ENCODE measurements at regions of chr11 and their contacts with region 1.

Region 1: DNA sequence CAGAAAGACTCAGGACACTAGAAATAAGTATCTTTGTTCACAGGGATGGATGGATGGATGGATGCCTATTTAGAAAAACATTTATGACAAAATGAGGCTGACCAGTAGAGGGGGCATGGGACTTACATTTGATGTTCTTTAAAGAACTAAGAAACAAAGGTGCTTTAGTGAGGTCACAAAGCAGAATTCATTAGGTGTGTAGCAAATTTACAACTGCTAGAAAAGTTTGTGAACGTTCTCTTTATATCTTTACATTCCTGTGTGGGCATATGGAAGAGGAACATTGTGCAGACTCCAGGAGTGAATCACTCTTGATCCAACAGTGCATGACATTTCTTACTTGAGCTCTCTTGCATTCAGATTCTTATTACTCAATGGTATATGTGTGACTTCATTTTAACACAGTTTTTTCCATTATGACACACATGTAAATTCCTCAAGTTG is 15.8 kb upstream of the SIK2 start:
- ATAC-seq: peak in 3 of 8 experiments; percentile 48 to 66 (median 50)
- H3K4me3 ChIP-seq: no peak overlapping the region
- H3K27ac ChIP-seq: no peak overlapping the region
- H3K4me1 ChIP-seq: no peaks in the 10 kb centered on the region

Region 2: DNA sequence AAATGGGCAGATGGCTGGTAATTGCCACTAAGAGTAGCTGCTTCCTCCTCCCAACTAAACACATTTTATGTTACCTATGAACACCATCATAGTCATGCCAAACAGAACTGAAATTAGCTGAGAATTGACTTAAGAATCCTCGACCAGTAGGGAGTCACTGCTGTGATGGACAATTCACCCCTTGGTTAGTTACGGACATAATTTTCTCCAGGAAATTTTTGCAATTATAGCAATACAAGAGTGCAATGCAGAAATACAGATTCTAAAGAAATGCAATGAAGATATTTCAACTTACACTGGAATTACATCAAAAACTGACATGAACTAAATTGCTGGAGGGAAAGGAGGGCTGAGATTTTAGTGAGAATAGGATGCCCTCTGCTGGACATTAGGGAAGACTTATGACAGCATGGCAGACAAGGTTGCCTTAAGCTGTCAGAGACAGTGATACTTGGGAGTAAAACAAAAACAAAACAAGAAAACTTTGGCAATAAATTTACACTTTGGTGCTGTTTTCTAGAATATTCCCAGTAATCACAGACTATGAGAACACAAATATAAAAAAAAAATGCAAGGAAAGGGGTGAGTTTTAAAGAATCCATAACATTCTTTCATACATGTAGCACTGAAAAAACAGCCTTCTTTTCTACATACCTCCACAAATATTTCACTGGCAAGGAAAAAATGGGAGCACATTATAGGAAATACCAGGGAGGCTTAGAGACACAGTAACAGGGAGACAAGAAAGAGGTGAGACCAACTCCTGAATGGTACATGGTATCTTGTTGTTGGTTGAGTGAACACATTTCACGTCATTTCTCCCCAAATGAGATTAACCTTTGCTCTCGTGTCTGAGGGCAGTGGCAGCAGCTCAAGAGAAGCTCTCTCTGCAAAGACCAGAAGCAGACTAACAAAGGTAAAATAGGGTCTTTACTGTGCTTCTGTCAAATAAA is 191.0 kb after region 1 on chr11:
- in situ Hi-C with region 1: loop called in 2 of 9 experiments (anchors 25 kb)
- ATAC-seq: peak; percentile 86 to 98 (median 91)
- H3K4me3 ChIP-seq: no peak overlapping the region
- H3K27ac ChIP-seq: no peak overlapping the region
- H3K4me1 ChIP-seq: peaks cover 7 to 10% of the 10 kb centered on the region in 2 donors

Region 3: DNA sequence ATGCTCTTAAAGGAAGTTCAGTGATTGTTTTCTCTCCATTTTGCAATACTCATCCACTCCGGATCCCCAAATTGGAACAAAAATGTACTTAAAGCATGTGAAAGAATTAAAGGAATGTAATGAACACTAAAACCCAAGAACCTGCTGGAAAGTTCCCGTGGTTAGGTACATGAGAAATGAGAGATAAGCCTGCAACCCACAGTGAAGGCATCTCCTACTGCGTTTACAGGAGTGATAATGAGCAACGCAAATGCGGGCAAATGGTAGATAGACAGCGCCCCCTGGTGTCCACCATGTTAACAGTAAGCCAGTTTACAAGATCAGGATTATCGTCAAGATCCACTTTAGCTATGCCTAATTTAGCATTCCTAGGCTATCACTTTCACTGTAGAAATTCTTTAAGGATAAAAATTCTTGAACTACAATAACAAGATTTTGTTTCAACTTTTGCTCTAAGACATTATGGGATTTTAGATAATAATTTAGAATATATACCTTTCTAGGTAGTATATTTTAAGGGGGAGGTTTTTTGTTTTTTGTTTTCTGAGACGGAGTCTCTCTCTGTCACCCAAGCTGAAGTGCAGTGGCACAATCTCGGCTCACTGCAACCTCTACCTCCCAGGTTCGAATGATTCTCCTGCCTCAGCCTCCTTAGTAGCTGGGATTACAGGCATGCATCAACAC is 255.1 kb after region 1 on chr11:
- in situ Hi-C with region 1: loop called in 2 of 9 experiments (anchors 10 to 25 kb)
- ATAC-seq: peak; percentile 89 to 98 (median 94)
- H3K4me3 ChIP-seq: no peak overlapping the region
- H3K27ac ChIP-seq: no peak overlapping the region
- H3K4me1 ChIP-seq: no peaks in the 10 kb centered on the region

Measured in motor neuron (in vitro differentiated cells).